Lower leg skin (tissue), 4 donors: ENCODE measurements at regions of chr10 and their contacts with region 1.

Region 1: GRCh38 chr10:61664985-61665384 is 2.3 kb downstream of the CABCOCO1 start:
- DNase-seq: no peak
- H3K4me3 ChIP-seq: no peak overlapping the region
- CTCF ChIP-seq: no peak
- POLR2A ChIP-seq: no peak

Region 2: DNA sequence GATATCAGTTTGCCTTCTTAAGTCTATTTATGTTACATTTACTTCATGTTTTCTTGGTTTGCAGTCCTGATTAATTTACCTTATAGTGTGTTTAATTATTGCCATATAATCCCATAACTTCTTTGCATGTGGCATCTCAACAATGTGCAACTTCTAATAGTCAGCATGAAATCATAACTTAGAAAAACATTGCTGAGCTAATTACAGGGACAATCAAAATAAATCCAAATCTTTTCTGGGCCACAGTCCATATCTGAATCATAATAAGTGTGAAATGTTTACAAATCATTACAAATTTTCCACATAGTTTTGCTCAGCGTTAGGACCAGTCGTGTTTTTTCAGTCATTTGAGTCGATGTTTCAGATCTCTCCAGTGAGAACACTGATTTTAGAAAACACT is 31.3 kb before region 1 on chr10:
- intact Hi-C with region 1: loop called (anchors 1 kb)
- DNase-seq: no peak
- H3K4me3 ChIP-seq: no peak overlapping the region
- CTCF ChIP-seq: no peak
- POLR2A ChIP-seq: no peak

Region 3: GRCh38 chr10:61786728-61787127 is 121.7 kb after region 1 on chr10:
- intact Hi-C with region 1: no loop called
- DNase-seq: no peak
- H3K4me3 ChIP-seq: no peak overlapping the region
- CTCF ChIP-seq: no peak
- POLR2A ChIP-seq: no peak